MCF 10A (cell line): ENCODE measurements at regions of chr12 and their contacts with region 1.

Region 1: DNA sequence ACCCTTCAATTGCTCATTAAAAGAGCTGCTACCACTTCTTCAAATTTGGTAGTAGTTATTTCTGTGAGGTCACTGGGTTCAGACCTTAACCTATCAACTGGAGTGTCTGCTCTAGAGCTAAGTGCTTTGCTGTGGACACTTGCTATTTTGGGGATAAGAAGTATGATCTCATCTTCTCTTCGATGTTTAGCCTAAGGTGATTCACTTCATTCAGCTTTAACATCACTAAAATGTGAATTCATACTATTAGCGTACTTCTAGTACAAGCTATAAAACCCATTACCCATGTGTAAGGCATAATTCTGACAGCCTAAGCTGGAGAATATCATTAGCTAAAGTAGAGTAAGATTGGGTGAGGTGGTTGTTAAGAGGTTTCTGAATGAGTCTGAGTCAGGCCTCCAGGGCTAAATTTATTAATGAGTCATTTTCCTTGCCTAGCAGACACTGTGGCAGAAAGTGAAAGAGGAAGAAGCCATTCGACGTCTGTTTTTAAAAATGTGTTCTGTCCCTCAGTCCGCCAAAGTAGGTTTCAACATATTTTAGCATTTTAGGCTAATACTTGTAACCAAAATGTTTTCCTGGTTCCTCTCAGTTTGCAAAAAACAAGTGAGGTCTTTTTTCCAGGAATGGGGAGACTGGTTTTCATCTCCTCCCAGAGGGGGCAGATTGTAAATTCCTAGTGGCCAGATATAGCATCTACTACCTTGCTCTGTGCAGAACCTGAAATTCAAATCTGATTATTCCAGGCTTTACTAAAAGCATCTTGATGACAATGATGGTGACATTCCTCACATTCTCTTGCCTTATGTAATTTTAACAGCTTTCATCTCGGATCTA is 103.6 kb downstream of the SSPN start:
- DNase-seq: peak; percentile 82
- H3K4me3 Mint-ChIP-seq: peak overlapping the region; percentile 61
- H3K27ac Mint-ChIP-seq: peak overlapping the region; percentile 76
- H3K4me1 Mint-ChIP-seq: peaks cover 8% of the 10 kb centered on the region
- H3K27me3 Mint-ChIP-seq: no peaks in the 10 kb centered on the region
- CTCF ChIP-seq: peak; percentile 36

Region 2: DNA sequence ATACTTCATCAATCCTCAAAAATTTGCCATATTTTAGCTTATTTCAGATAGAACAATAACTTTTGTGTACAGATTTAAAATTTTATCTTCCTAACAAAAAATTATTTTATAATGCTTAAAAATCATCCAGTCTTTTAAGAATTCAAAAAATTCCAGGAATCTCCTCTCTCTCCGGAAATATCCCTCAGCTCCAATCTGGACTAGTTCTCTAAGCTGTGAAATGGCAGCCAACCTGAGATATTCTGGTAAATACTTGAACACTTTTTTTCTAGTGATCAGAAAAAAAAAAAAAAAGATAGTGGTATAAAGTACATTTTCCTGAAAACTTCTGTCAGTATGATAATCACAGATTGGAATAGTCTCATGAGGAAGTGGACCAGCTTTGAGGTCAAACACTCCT is 46.1 kb before region 1 on chr12:
- CTCF ChIA-PET with region 1: no interaction called
- POLR2A ChIA-PET with region 1: no interaction called
- intact Hi-C with region 1: no loop called
- DNase-seq: no peak
- H3K4me3 Mint-ChIP-seq: no peak overlapping the region
- H3K27ac Mint-ChIP-seq: no peak overlapping the region
- H3K4me1 Mint-ChIP-seq: no peaks in the 10 kb centered on the region
- H3K27me3 Mint-ChIP-seq: no peaks in the 10 kb centered on the region
- CTCF ChIP-seq: no peak

Region 3: GRCh38 chr12:26274441-26275312 is 24.3 kb before region 1 on chr12:
- CTCF ChIA-PET with region 1: interaction called, 7 read pairs
- POLR2A ChIA-PET with region 1: interaction called, 11 read pairs
- intact Hi-C with region 1: no loop called
- DNase-seq: peak; percentile 99
- H3K4me3 Mint-ChIP-seq: no peak overlapping the region
- H3K27ac Mint-ChIP-seq: peak overlapping the region; percentile 64
- H3K4me1 Mint-ChIP-seq: peaks cover 37% of the 10 kb centered on the region
- H3K27me3 Mint-ChIP-seq: no peaks in the 10 kb centered on the region
- CTCF ChIP-seq: no peak

Region 4: DNA sequence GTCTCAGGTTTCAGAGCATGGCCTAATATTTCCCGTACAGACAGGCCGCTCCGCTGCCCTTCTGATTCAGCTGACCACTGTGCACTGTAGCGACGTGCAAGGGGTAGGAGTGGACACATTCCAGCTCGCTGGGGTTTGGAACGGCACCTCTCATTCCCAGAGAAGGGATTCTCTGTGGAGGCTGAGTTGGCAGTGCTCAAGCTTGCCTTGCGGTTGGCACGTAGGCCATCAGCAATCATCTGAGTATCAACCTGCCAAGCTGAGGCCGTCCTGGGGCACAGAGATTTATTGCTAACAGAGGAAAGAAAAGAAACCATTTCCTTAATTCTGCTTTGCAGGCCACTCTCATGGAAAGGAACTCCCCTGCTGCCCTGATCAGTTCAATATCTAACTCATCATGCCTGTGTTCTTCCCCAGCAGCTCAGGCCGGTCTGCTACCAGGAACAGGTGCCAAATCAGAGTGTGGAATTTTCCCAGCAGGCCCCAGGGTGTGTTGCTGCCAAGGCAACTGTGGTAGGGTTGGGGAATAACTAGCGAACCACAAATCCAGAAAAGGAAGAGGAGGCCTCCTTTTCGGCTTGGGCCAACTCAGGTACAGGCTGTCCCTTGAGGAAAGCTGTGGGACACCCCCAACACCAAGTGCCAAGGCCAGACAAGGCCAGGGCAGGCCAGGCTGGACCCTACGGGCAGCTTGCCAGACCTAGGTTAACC is 11.2 kb before region 1 on chr12:
- CTCF ChIA-PET with region 1: interaction called, 10 read pairs
- POLR2A ChIA-PET with region 1: interaction called, 16 read pairs
- intact Hi-C with region 1: no loop called
- DNase-seq: peak; percentile 33
- H3K4me3 Mint-ChIP-seq: no peak overlapping the region
- H3K27ac Mint-ChIP-seq: peak overlapping the region; percentile 87
- H3K4me1 Mint-ChIP-seq: peaks cover 13% of the 10 kb centered on the region
- H3K27me3 Mint-ChIP-seq: no peaks in the 10 kb centered on the region
- CTCF ChIP-seq: no peak